Caco-2 (cell line): ENCODE measurements at regions of chr3 and their contacts with region 1.

Region 1: DNA sequence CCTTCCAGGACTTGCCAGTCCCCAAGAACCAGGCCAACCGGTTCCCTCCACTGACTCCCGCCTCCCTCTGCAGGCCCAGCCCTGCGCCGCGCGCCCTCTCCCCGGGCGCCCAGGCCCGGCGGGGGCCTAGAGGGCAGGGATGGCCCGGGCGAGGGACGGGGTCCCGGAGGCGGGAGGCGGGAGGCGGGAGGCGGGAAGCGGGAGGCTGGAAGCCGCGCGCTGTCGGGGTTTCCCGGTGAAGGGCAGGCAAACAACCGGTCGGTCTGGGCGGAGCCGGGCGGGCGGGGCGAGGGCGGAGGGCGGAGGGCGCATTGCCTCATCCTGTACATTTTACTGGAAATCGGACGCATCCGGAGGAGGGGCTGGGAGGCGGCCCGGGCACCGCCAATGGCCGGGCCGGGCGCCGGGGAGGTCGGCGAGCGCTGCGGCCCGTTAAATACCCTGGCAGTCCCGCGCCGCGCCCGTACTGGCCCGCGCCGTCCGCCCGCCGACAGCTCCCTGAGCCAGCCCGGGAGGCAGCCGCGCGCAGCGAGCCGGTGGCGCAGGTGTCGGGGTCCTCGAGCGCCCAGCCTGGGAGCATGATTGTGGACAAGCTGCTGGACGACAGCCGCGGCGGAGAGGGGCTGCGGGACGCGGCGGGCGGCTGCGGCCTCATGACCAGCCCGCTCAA is at the start of gene NFKBIZ:
- DNase-seq: peak; percentile 95 to 96
- H3K4me3 ChIP-seq: peak within 1 kb of the TSS; percentile 96
- H3K4me3 Mint-ChIP-seq: peak within 1 kb of the TSS; percentile 65
- H3K27ac Mint-ChIP-seq: peak within 1 kb of the TSS; percentile 61
- H3K4me1 ChIP-seq: peaks cover 54% of the 10 kb centered on the region
- H3K4me1 Mint-ChIP-seq: peaks cover 34% of the 10 kb centered on the region
- H3K27me3 ChIP-seq: no peaks in the 10 kb centered on the region
- H3K27me3 Mint-ChIP-seq: no peaks in the 10 kb centered on the region
- CTCF ChIP-seq: no peak
- total RNA-seq, gene NFKBIZ: 20.2 and 24.5 TPM in 2 replicates

Region 2: DNA sequence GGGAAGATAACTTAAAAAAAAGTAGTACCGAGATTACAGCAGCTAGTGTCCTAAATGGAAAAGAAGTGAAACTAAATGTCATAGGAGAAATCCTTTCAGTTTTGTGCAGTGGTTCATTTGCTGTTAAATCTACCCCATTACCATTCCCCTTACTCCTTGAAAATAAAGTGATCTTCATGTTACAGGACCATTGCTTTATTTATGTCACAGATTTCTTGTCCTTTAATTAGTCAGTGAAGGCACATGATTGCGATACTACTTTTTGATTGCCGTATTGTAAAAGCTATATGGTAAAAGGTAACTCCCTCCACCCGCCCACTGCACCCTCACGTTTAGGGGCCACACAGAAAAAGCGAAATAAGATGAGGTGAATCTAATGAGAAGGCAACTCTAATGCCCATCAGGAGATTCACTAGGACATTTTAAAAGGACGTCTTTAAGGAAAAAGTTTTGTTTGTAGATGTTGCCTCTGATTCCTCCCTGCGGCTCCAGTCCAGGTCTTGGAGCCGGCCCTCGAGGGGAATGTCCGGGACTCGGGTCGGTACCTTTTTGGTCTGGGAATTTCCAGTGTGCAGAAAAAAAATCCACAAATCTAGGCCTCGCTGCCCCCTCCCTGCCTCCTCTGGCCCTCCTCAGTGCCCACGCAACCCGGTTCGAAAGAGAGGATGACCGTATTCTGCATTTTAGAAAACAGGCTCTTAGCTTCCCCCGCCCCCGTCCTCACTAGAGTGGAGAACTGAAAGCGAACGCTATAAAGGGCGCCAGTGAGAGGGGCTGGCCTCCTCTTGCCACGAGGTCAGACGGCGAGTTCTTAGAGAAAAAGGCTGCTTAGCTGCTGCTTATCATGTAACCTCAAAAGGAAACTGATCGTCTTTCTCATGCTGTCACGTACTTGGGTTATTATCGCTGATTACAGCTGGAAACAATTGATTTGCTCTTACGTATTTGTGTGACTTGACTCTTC is 21.7 kb before region 1 on chr3:
- CTCF ChIA-PET with region 1: no interaction called
- POLR2A ChIA-PET with region 1: interaction called, 3 read pairs
- intact Hi-C with region 1: loop called (anchors 1 kb)
- DNase-seq: peak; percentile 70 to 80
- H3K4me3 ChIP-seq: peak overlapping the region; percentile 41
- H3K4me3 Mint-ChIP-seq: peak overlapping the region; percentile 87
- H3K27ac Mint-ChIP-seq: peak overlapping the region; percentile 88
- H3K4me1 ChIP-seq: peaks cover 5% of the 10 kb centered on the region; the same call in 1 of the 2 replicates
- H3K4me1 Mint-ChIP-seq: no peaks in the 10 kb centered on the region
- H3K27me3 ChIP-seq: no peaks in the 10 kb centered on the region
- H3K27me3 Mint-ChIP-seq: no peaks in the 10 kb centered on the region
- CTCF ChIP-seq: no peak